ENCODE measurements at regions of chr4 and their contacts with region 1.

Region 1: GRCh38 chr4:139295206-139295941 is 5.9 kb upstream of the NAA15 start:
- DNase-seq: peak; percentile 97
- H3K4me3 ChIP-seq: peak overlapping the region; percentile 89
- H3K27ac ChIP-seq: peak overlapping the region; percentile 96
- H3K4me1 ChIP-seq: peaks cover 21% of the 10 kb centered on the region
- H3K27me3 ChIP-seq: no peaks in the 10 kb centered on the region
- CTCF ChIP-seq: peak; percentile 97

Region 2: GRCh38 chr4:138910607-138911336 is 384.6 kb before region 1 on chr4:
- CTCF ChIA-PET with region 1: no interaction called
- POLR2A ChIA-PET with region 1: no interaction called
- intact Hi-C with region 1: no loop called
- DNase-seq: no peak
- H3K4me3 ChIP-seq: no peak overlapping the region
- H3K27ac ChIP-seq: no peak overlapping the region
- H3K4me1 ChIP-seq: no peaks in the 10 kb centered on the region
- H3K27me3 ChIP-seq: no peaks in the 10 kb centered on the region
- CTCF ChIP-seq: no peak

Region 3: GRCh38 chr4:139030614-139031235 is 264.6 kb before region 1 on chr4:
- CTCF ChIA-PET with region 1: interaction called, 15 read pairs
- POLR2A ChIA-PET with region 1: no interaction called
- intact Hi-C with region 1: loop called (anchors 5 kb)
- DNase-seq: peak; percentile 86
- H3K4me3 ChIP-seq: no peak overlapping the region
- H3K27ac ChIP-seq: no peak overlapping the region
- H3K4me1 ChIP-seq: peaks cover 3% of the 10 kb centered on the region
- H3K27me3 ChIP-seq: no peaks in the 10 kb centered on the region
- CTCF ChIP-seq: peak; percentile 91

Region 4: GRCh38 chr4:139184129-139184528 is 111.2 kb before region 1 on chr4:
- CTCF ChIA-PET with region 1: no interaction called
- POLR2A ChIA-PET with region 1: interaction called, 3 read pairs
- intact Hi-C with region 1: loop called (anchors 2 kb)
- DNase-seq: peak; percentile 48
- H3K4me3 ChIP-seq: no peak overlapping the region
- H3K27ac ChIP-seq: no peak overlapping the region
- H3K4me1 ChIP-seq: peaks cover 11% of the 10 kb centered on the region
- H3K27me3 ChIP-seq: no peaks in the 10 kb centered on the region
- CTCF ChIP-seq: peak; percentile 49; the same call in 1 of the 2 replicates

Region 5: GRCh38 chr4:139229534-139230039 is 65.8 kb before region 1 on chr4:
- CTCF ChIA-PET with region 1: interaction called, 6 read pairs
- POLR2A ChIA-PET with region 1: no interaction called
- intact Hi-C with region 1: loop called (anchors 2 kb)
- DNase-seq: peak; percentile 78
- H3K4me3 ChIP-seq: no peak overlapping the region
- H3K27ac ChIP-seq: no peak overlapping the region
- H3K4me1 ChIP-seq: peaks cover 17% of the 10 kb centered on the region
- H3K27me3 ChIP-seq: no peaks in the 10 kb centered on the region
- CTCF ChIP-seq: peak; percentile 82

Measured in A673 (cell line).